ENCODE measurements at regions of chr7 and their contacts with region 1.

Region 1: DNA sequence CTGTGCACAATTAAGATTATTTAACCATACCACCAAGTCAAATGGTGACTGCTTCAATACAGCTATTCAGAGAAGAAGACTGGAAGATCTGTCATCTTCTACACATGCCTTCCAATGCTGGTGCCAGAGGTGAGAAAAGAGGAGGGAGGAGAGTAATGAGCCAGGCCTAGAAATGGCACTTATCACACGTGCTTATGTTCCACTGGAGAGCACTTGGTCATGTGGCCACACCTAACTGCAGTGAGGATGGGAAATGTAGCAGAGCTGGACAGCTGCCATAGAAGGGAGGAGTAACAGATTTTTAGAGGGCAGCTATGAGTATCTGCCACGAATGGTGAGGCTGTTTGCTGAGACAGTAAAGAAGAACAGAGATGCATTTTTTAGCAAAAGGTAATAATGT is 77.1 kb downstream of the MPLKIP start:
- DNase-seq: no peak
- H3K4me3 Mint-ChIP-seq: no peak overlapping the region
- H3K27ac Mint-ChIP-seq: no peak overlapping the region
- H3K4me1 Mint-ChIP-seq: peaks cover 4% of the 10 kb centered on the region
- H3K27me3 Mint-ChIP-seq: no peaks in the 10 kb centered on the region

Region 2: DNA sequence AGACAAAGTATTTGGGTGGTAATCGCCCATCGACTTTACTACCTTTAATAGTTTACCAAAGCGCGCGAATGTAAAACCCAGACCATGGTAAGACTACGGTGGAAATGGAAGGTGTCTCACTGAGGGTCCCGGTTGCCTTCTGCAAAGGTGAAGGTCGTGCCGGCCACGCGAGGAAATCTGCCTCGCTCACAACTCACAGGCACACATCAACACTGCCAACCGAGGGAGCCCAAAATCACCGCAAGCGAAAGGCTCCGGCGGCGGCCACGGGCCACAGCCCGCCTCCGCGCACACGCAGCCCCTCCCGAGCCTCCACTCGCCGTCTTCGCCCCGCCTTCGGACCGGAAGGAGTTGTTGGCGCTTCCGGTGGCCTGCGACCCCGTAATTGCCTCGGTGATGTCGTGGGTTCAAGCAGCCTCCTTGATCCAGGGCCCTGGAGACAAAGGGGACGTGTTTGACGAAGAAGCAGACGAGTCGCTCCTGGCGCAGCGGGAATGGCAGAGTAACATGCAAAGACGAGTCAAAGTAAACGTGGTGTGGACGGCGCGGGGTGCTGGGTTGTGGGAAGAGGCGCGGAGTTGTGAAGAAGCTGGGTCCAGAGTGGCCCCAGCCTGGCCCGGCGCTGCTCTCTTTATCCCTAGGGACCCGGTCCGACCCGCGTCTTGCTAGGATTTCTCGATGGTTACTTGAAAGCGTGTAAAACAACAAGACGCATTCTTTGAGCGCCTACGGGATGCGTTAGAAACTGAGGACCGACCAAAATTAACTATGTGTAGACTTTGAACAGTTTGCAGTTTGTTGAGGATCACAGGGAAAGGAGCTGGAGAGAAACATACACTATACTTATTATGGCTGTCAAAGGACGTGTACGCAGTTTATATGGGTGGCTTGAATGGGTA is 491.0 kb before region 1 on chr7 and contains the start of gene YAE1:
- CTCF ChIA-PET with region 1: no interaction called
- intact Hi-C with region 1: loop called (anchors 5 kb)
- DNase-seq: peak; percentile 86
- H3K4me3 Mint-ChIP-seq: peak within 1 kb of the TSS; percentile 97
- H3K27ac Mint-ChIP-seq: peak within 1 kb of the TSS; percentile 95
- H3K4me1 Mint-ChIP-seq: peaks cover 18% of the 10 kb centered on the region
- H3K27me3 Mint-ChIP-seq: no peaks in the 10 kb centered on the region
- total RNA-seq, gene YAE1: 4.6 to 5.5 TPM

Region 3: GRCh38 chr7:39650676-39651075 is 406.6 kb before region 1 on chr7:
- CTCF ChIA-PET with region 1: no interaction called
- intact Hi-C with region 1: no loop called
- DNase-seq: no peak
- H3K4me3 Mint-ChIP-seq: no peak overlapping the region
- H3K27ac Mint-ChIP-seq: no peak overlapping the region
- H3K4me1 Mint-ChIP-seq: peaks cover 20% of the 10 kb centered on the region
- H3K27me3 Mint-ChIP-seq: no peaks in the 10 kb centered on the region

Region 4: GRCh38 chr7:39746103-39746819 is 311.0 kb before region 1 on chr7:
- CTCF ChIA-PET with region 1: interaction called, 7 read pairs
- intact Hi-C with region 1: loop called (anchors 10 kb)
- DNase-seq: peak; percentile 76
- H3K4me3 Mint-ChIP-seq: no peak overlapping the region
- H3K27ac Mint-ChIP-seq: no peak overlapping the region
- H3K4me1 Mint-ChIP-seq: peaks cover 18% of the 10 kb centered on the region
- H3K27me3 Mint-ChIP-seq: no peaks in the 10 kb centered on the region

Region 5: GRCh38 chr7:39894904-39895303 is 162.4 kb before region 1 on chr7:
- CTCF ChIA-PET with region 1: interaction called, 182 read pairs
- intact Hi-C with region 1: loop called (anchors 1 kb)
- DNase-seq: no peak
- H3K4me3 Mint-ChIP-seq: no peak overlapping the region
- H3K27ac Mint-ChIP-seq: no peak overlapping the region
- H3K4me1 Mint-ChIP-seq: no peaks in the 10 kb centered on the region
- H3K27me3 Mint-ChIP-seq: no peaks in the 10 kb centered on the region

Region 6: GRCh38 chr7:40041456-40041855 is 15.8 kb before region 1 on chr7:
- CTCF ChIA-PET with region 1: interaction called, 14 read pairs
- intact Hi-C with region 1: no loop called
- DNase-seq: no peak
- H3K4me3 Mint-ChIP-seq: no peak overlapping the region
- H3K27ac Mint-ChIP-seq: no peak overlapping the region
- H3K4me1 Mint-ChIP-seq: peaks cover 12% of the 10 kb centered on the region
- H3K27me3 Mint-ChIP-seq: no peaks in the 10 kb centered on the region

Region 7: GRCh38 chr7:40134428-40135316 is 77.4 kb after region 1 on chr7 and contains the starts of genes MPLKIP and SUGCT:
- CTCF ChIA-PET with region 1: interaction called, 3 read pairs
- intact Hi-C with region 1: loop called (anchors 2 kb)
- DNase-seq: peak; percentile 87
- H3K4me3 Mint-ChIP-seq: peak within 1 kb of the TSS; percentile 93
- H3K27ac Mint-ChIP-seq: peak within 1 kb of the TSS; percentile 96
- H3K4me1 Mint-ChIP-seq: peaks cover 26% of the 10 kb centered on the region
- H3K27me3 Mint-ChIP-seq: no peaks in the 10 kb centered on the region
- total RNA-seq, gene MPLKIP: 38.1 to 38.8 TPM
- total RNA-seq, gene SUGCT: 0.81 to 1.2 TPM